Lower leg skin (tissue), 4 donors: ENCODE measurements at regions of chr6 and their contacts with region 1.

Region 1: DNA sequence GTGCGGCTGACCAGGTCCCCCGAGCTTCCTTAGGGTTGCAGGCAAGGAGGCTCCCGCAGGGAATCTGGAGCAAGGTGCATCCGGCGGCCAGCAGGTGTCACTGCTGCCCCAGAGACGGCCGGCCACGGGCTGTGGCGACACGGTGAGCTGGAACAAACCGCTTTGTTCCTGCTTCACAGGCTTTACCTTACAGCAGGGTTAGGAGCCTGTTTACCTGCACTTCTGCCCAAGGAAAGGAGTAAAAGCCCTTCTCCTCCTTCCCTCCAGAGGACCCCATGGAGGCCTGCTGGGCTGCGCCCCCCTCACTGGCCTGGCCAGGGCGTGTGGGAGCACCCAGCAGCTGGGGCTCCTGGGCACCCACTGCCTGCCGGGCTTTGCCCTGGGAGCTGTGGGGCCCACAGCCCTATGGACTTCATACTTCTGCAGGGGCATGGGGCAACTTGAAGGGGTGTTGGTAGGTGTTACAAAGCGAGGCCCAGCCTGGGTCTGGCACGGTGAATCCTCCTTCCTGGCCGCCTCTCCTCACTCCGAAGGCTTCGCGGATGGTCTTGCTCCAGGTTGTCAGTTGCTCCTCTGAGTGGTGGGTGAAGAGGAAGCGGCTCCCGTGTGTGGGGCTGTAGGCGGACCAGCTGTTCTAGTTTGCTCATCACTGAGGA is 88.4 kb downstream of the CDC5L start:
- DNase-seq: peak; percentile 52 to 95
- H3K4me3 ChIP-seq: no peak overlapping the region
- CTCF ChIP-seq: peak in 1 of 3 donors; percentile 66
- POLR2A ChIP-seq: no peak

Region 2: GRCh38 chr6:44655412-44656342 is 179.8 kb after region 1 on chr6:
- intact Hi-C with region 1: loop called (anchors 10 kb)
- DNase-seq: peak; percentile 89 to 97
- H3K4me3 ChIP-seq: no peak overlapping the region
- CTCF ChIP-seq: peak in 1 of 3 donors; percentile 95
- POLR2A ChIP-seq: no peak

Region 3: DNA sequence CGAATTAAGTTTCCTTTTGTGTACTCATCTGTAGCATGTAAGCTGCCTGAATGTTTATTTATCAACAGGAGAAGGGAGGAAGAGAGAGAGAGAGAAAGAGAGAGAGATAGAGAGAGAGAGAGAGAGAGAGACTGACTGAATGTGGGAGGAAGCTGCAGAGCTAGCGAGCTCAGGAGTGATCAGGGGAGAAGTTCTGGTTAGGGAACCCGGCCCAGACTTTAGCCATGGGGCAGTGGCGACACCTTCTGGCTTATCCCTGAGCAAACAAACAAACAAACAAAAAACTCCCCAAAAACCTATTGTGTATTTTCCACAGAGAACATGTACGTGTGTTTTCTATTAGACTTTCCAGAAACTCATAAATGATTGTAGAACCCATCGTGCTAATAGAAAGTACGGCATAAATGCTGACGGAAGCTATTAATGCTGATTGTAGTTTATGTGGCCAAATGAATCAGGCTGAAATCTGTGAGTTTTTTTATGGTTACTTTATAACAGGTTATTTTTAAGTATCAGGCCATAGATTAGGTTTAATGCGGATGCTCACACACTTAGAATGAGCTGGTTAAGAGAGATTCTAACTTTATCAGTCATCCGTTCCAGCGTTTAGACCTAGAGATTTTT is 1446.9 kb after region 1 on chr6:
- intact Hi-C with region 1: loop called (anchors 5 kb)
- DNase-seq: peak; percentile 66 to 92
- H3K4me3 ChIP-seq: no peak overlapping the region
- CTCF ChIP-seq: peak in 1 of 3 donors; percentile 74
- POLR2A ChIP-seq: no peak

Region 4: DNA sequence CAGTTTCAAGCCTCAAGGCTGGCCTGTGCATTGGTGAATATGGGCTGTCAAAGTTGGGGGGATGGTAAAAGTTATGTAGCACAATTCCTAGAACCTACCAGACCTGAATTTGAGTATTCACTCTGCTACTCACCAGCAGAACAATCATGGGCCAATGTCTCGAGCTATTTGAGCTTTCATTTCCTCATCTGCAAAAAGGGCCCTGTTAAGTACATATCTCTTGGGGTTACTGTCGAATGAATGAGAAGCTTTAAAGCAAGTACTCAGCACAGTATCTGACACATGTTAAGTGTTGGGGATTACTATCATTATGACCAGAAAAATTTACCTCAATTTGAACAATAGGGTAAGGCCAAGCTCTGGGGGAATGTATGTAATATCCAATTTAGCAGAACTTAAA is 1640.4 kb after region 1 on chr6:
- intact Hi-C with region 1: no loop called
- DNase-seq: no peak
- H3K4me3 ChIP-seq: no peak overlapping the region
- CTCF ChIP-seq: no peak
- POLR2A ChIP-seq: no peak